ENCODE measurements at regions of chr2 and their contacts with region 1.

Region 1: DNA sequence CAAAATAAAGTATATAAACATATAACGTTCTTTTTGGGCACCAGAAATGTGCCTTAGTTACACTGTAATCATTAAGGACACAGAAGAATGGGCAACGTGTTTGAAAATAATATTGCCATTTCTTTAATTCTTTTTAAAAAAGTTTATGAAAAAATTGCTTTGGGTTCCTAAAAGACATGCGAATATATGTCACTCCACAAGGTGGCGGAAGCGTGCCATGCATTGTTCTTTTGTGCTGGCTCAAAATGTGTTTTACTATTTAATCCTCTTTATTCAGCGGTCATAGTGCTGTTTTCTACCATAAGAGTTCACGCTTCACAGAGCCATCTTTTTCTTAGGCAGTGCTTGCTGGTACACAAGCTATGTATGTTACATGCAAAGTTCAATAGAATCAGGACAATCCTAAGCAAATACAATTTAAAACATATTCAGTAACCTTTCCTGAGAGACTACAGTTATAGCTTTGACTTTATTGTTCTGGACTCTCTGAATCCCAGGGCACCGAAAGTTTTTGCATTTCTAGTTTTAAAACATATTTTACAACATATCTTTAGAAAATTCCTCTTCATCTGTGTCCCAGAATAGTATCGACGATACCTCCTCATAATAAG is 147.8 kb upstream of the ERBB4 start:
- DNase-seq: peak; percentile 83
- H3K4me3 ChIP-seq: no peak overlapping the region
- H3K27ac ChIP-seq: peak overlapping the region; percentile 62
- H3K4me1 ChIP-seq: peaks cover 13% of the 10 kb centered on the region
- H3K27me3 ChIP-seq: no peaks in the 10 kb centered on the region
- CTCF ChIP-seq: peak; percentile 87

Region 2: GRCh38 chr2:212777020-212777491 is 90.7 kb after region 1 on chr2:
- CTCF ChIA-PET with region 1: no interaction called
- POLR2A ChIA-PET with region 1: no interaction called
- intact Hi-C with region 1: loop called (anchors 5 kb)
- DNase-seq: peak; percentile 78
- H3K4me3 ChIP-seq: no peak overlapping the region
- H3K27ac ChIP-seq: peak overlapping the region; percentile 17
- H3K4me1 ChIP-seq: peaks cover 32% of the 10 kb centered on the region
- H3K27me3 ChIP-seq: no peaks in the 10 kb centered on the region
- CTCF ChIP-seq: peak; percentile 75

Region 3: DNA sequence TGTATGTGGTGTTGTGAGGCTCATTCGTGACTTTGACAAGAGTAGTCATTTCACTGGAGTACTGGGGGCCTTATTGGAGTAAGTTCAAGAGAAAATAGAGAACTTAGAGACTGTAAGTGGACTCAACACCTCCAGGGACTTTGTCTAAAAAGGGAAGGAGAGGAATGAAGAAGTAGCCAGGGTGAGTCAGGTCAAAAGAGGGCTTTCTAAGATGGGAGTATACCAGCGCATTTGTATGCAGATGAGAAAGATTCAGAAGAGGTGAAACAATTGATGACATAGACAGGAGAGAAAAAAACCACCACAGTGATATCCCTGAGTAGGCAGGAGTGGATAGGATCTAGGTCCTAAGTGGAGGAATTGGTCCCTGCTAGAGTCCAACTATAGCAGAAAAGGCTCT is 218.3 kb after region 1 on chr2:
- CTCF ChIA-PET with region 1: no interaction called
- POLR2A ChIA-PET with region 1: no interaction called
- intact Hi-C with region 1: loop called (anchors 1 kb)
- DNase-seq: no peak
- H3K4me3 ChIP-seq: no peak overlapping the region
- H3K27ac ChIP-seq: peak overlapping the region; percentile 73
- H3K4me1 ChIP-seq: peaks cover 79% of the 10 kb centered on the region
- H3K27me3 ChIP-seq: no peaks in the 10 kb centered on the region
- CTCF ChIP-seq: no peak

Region 4: DNA sequence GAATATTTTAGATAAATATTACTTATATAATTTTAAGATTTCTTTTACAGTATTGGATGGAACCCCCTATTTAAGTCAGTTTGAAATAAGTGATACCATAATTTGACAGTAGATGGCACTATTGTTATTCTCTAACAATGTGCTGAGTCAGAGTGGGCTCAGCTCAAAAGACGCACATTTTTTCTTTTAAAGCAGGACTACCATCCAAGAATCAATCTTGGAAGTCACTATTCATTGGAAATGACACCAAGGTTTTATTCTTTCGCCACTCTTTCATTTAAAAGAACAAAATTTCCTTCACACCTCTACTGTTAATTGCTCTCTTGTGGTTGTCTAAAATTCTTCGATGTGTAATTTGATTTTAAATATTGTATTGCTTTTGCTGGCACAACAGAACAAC is 565.2 kb after region 1 on chr2:
- CTCF ChIA-PET with region 1: no interaction called
- POLR2A ChIA-PET with region 1: no interaction called
- intact Hi-C with region 1: loop called (anchors 5 kb)
- DNase-seq: peak; percentile 87
- H3K4me3 ChIP-seq: no peak overlapping the region
- H3K27ac ChIP-seq: no peak overlapping the region
- H3K4me1 ChIP-seq: peaks cover 22% of the 10 kb centered on the region
- H3K27me3 ChIP-seq: no peaks in the 10 kb centered on the region
- CTCF ChIP-seq: peak; percentile 65

Measured in A673 (cell line).